ENCODE measurements at regions of chr5 and their contacts with region 1.

Region 1: GRCh38 chr5:141564216-141564692 is 54.5 kb downstream of the DIAPH1 start:
- DNase-seq: peak; percentile 80
- H3K4me3 Mint-ChIP-seq: no peak overlapping the region
- H3K27ac Mint-ChIP-seq: peak overlapping the region; percentile 77
- H3K4me1 Mint-ChIP-seq: peaks cover 22% of the 10 kb centered on the region
- H3K27me3 Mint-ChIP-seq: no peaks in the 10 kb centered on the region

Region 2: GRCh38 chr5:140557136-140557805 is 1007.0 kb before region 1 on chr5 and contains the start of gene SRA1:
- CTCF ChIA-PET with region 1: no interaction called
- intact Hi-C with region 1: loop called (anchors 2 kb)
- DNase-seq: peak; percentile 92
- H3K4me3 Mint-ChIP-seq: peak within 1 kb of the TSS; percentile 79
- H3K27ac Mint-ChIP-seq: peak within 1 kb of the TSS; percentile 93
- H3K4me1 Mint-ChIP-seq: peaks cover 46% of the 10 kb centered on the region
- H3K27me3 Mint-ChIP-seq: no peaks in the 10 kb centered on the region
- total RNA-seq, gene SRA1: 38.0 to 39.6 TPM

Region 3: DNA sequence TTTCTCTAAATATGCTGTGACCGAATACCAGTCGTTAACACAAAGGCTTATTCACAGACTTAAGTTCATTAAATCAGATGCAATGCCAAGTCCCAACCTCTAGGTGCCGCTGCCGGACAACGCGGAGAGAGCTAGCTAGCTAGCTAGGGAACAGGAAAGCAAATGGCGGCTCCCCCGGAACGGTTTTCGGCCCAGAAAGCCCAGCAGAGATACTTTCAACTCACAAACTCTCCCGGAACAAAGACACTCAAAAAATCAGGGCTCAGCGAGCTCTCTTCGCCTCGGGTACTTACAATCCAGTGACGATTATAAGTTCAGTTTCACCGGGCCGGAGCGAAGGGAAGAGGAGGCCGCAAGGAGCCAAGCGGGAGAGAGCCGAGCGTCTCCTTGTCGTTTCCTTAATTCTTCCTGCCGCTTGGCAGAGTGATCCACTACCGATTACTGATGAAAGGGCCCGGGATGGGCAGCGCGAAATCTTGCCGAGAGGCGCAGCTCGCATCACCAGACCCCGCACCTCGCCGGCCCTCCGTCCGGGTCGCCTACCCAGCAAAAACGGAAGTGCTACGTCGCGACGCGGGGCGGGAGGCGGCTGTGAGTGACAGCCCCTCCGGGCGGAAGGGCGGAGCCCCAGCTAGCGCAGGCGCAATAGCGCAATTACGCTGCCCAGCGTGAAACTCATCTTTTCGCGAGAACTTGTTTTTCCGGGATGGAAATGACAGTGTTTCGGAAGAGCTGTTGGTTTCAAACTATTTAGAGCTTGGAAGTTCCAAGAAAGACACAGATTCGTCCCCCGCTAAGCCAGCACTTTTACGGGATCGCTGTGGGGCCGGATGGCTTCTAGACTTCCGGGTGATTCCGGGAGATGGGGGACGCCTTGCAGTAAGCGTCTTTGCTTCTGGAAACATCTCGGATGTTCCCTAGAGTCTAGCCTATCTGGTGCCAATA is 243.8 kb before region 1 on chr5 and contains the start of gene TAF7:
- CTCF ChIA-PET with region 1: interaction called, 15 read pairs
- intact Hi-C with region 1: loop called (anchors 1 kb)
- DNase-seq: peak; percentile 95
- H3K4me3 Mint-ChIP-seq: peak within 1 kb of the TSS; percentile 97
- H3K27ac Mint-ChIP-seq: peak within 1 kb of the TSS; percentile 99
- H3K4me1 Mint-ChIP-seq: peaks cover 25% of the 10 kb centered on the region
- H3K27me3 Mint-ChIP-seq: no peaks in the 10 kb centered on the region
- total RNA-seq, gene TAF7: 57.0 to 57.9 TPM

Region 4: DNA sequence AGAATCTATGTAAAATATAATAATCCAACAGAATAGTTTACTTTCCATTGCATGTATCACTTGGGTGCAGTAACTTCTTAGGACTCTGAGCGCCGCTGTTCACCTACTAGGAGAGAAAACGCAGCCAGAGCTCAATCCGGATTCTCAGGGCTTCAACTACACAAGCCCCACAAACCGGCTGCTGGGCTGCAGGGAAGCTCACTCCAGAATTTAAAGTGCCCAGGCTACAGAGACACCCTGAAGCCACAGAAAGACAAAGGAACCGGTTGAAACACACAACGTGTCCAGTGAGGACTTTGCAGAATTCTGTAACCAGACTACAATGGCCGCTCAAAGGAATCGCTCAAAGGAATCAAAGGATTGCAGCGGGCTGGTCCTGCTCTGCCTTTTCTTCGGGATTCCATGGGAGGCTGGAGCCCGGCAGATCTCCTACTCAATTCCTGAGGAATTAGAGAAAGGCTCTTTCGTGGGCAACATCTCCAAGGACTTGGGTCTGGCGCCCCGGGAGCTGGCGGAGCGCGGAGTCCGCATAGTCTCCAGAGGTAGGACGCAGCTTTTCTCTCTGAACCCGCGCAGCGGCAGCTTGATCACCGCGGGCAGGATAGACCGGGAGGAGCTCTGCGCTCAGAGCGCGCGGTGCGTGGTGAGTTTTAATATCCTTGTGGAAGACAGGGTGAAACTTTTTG is 151.3 kb before region 1 on chr5 and contains the start of gene PCDHGA10:
- CTCF ChIA-PET with region 1: interaction called, 13 read pairs
- intact Hi-C with region 1: loop called (anchors 1 kb)
- DNase-seq: peak; percentile 73
- H3K4me3 Mint-ChIP-seq: peak within 1 kb of the TSS; percentile 78
- H3K27ac Mint-ChIP-seq: no peak within 1 kb of the TSS
- H3K4me1 Mint-ChIP-seq: peaks cover 16% of the 10 kb centered on the region
- H3K27me3 Mint-ChIP-seq: peaks cover 69% of the 10 kb centered on the region
- total RNA-seq, gene PCDHGA10: 0.05 TPM in 1 of 2 experiments, not detected in the other

Region 5: DNA sequence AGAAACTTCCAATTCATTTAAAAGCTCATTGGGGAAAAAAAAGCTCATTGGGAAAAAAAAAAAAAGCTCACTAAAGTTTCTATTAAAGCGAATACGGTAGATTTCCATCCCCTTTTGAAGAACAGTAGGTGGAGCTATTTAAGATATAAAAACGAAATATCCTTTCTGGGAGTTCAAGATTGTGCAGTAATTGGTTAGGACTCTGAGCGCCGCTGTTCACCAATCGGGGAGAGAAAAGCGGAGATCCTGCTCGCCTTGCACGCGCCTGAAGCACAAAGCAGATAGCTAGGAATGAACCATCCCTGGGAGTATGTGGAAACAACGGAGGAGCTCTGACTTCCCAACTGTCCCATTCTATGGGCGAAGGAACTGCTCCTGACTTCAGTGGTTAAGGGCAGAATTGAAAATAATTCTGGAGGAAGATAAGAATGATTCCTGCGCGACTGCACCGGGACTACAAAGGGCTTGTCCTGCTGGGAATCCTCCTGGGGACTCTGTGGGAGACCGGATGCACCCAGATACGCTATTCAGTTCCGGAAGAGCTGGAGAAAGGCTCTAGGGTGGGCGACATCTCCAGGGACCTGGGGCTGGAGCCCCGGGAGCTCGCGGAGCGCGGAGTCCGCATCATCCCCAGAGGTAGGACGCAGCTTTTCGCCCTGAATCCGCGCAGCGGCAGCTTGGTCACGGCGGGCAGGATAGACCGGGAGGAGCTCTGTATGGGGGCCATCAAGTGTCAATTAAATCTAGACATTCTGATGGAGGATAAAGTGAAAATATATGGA is 133.7 kb before region 1 on chr5 and contains the start of gene PCDHGA12:
- CTCF ChIA-PET with region 1: interaction called, 12 read pairs
- intact Hi-C with region 1: no loop called
- DNase-seq: peak; percentile 65
- H3K4me3 Mint-ChIP-seq: peak within 1 kb of the TSS; percentile 53
- H3K27ac Mint-ChIP-seq: no peak within 1 kb of the TSS
- H3K4me1 Mint-ChIP-seq: peaks cover 15% of the 10 kb centered on the region
- H3K27me3 Mint-ChIP-seq: peaks cover 54% of the 10 kb centered on the region
- total RNA-seq, gene PCDHGA12: not detected

Region 6: DNA sequence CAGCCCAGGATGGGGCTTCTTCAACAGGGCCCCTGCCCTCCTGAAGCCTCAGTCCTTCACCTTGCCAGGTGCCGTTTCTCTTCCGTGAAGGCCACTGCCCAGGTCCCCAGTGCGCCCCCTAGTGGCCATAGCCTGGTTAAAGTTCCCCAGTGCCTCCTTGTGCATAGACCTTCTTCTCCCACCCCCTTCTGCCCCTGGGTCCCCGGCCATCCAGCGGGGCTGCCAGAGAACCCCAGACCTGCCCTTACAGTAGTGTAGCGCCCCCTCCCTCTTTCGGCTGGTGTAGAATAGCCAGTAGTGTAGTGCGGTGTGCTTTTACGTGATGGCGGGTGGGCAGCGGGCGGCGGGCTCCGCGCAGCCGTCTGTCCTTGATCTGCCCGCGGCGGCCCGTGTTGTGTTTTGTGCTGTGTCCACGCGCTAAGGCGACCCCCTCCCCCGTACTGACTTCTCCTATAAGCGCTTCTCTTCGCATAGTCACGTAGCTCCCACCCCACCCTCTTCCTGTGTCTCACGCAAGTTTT is 51.8 kb before region 1 on chr5:
- CTCF ChIA-PET with region 1: interaction called, 23 read pairs
- intact Hi-C with region 1: loop called (anchors 2 kb)
- DNase-seq: peak; percentile 92
- H3K4me3 Mint-ChIP-seq: peak overlapping the region; percentile 73
- H3K27ac Mint-ChIP-seq: no peak overlapping the region
- H3K4me1 Mint-ChIP-seq: peaks cover 33% of the 10 kb centered on the region
- H3K27me3 Mint-ChIP-seq: no peaks in the 10 kb centered on the region

Region 7: DNA sequence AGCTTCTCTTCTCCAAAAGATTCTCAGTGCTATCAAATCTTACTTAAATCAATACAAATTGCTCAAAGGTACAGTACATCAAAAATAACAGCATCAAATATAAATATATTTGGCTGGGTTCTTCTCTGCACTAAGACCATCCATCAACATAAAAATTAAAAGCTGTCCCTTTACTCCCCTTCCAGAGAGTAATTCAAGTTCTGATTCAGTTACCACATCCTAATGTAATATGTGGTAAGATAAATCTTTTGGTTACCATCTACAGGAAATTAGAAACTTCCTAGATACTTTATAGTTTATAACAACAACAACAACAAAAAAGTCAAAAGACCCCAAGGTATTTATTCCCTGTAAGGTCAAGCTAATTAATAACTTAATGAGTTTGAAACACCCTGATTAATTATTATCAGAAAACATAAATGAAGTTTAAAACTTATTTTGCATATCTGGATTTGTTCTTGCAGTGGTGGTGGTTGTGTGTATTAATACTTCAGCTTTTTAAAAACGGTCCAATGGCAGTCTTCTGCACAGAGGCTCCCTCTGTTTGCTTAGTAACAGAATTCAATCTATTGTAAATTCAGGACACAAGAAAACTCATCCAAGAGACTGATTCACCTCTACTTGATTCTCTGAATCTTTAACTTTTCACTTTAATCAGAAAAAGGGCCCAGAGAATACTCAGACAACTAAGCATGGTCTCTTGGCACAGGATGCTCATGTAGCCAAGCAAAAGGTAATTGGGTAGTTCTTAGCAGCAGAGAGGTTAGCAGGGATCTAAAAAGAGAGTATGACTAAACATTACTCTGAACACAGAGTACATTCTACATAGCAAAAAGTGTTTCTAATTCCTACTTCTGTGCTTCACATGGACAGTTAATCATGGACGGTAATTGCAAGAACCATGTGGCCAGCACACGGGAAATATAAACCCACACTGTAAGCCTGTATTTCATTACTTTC is 34.4 kb after region 1 on chr5:
- CTCF ChIA-PET with region 1: interaction called, 15 read pairs
- intact Hi-C with region 1: no loop called
- DNase-seq: no peak
- H3K4me3 Mint-ChIP-seq: no peak overlapping the region
- H3K27ac Mint-ChIP-seq: peak overlapping the region; percentile 65
- H3K4me1 Mint-ChIP-seq: peaks cover 71% of the 10 kb centered on the region
- H3K27me3 Mint-ChIP-seq: no peaks in the 10 kb centered on the region

Measured in activated naive CD4-positive, alpha-beta T cell treated with anti-CD3 and anti-CD28 coated beads for 36 hours (primary cell).